ENCODE measurements at regions of chr12 and their contacts with region 1.

Region 1: GRCh38 chr12:110289044-110289710 is 8.1 kb downstream of the ATP2A2 start:
- DNase-seq: no peak
- ATAC-seq: peak; percentile 57

Region 2: GRCh38 chr12:110234755-110235154 is 54.4 kb before region 1 on chr12:
- intact Hi-C with region 1: loop called (anchors 5 kb)
- DNase-seq: no peak
- ATAC-seq: peak; percentile 47

Region 3: DNA sequence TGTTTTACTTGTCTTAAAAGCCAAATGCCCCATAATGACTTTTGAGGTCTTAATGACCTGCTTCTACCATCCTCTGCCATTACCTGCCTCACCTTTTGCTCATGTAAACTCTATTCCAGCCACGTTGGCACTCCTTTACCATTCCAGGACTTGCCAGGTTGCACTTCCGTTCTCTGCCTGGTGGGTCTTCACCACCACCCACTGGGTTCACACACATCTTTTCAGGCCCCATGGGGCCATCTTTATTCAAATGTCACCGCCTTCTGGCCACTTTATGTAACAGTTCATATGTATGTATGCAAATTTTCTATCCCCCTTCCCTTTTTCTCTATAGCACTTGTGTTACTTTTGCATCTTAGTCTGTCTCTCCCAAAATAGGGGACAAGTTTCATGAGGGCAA is 49.6 kb after region 1 on chr12:
- intact Hi-C with region 1: no loop called
- DNase-seq: no peak
- ATAC-seq: peak; percentile 3